ENCODE measurements at regions of chr6 and their contacts with region 1.

Region 1: GRCh38 chr6:38493931-38494547 is 145.7 kb downstream of the BTBD9 start:
- DNase-seq: peak; percentile 60 to 72 (median 69)
- H3K4me3 ChIP-seq: no peak overlapping the region
- H3K4me3 Mint-ChIP-seq: no peak overlapping the region
- H3K27ac ChIP-seq: no peak overlapping the region
- H3K27ac Mint-ChIP-seq: no peak overlapping the region
- H3K4me1 ChIP-seq: no peaks in the 10 kb centered on the region
- H3K4me1 Mint-ChIP-seq: peaks cover 0 to 7% (median 2%) of the 10 kb centered on the region in 4 donors
- H3K27me3 ChIP-seq: no peaks in the 10 kb centered on the region
- H3K27me3 Mint-ChIP-seq: no peaks in the 10 kb centered on the region

Region 2: GRCh38 chr6:37324131-37325033 is 1169.7 kb before region 1 on chr6:
- CTCF ChIA-PET with region 1: no interaction called
- POLR2A ChIA-PET with region 1: no interaction called
- intact Hi-C with region 1: loop called (anchors 2 kb)
- DNase-seq: no peak
- H3K4me3 ChIP-seq: no peak overlapping the region
- H3K4me3 Mint-ChIP-seq: no peak overlapping the region
- H3K27ac ChIP-seq: no peak overlapping the region
- H3K27ac Mint-ChIP-seq: peak overlapping the region in 4 of 7 donors; percentile 10 to 70 (median 44)
- H3K4me1 ChIP-seq: no peaks in the 10 kb centered on the region
- H3K4me1 Mint-ChIP-seq: peaks cover 3 to 4% (median 4%) of the 10 kb centered on the region in 4 donors
- H3K27me3 ChIP-seq: no peaks in the 10 kb centered on the region
- H3K27me3 Mint-ChIP-seq: no peaks in the 10 kb centered on the region

Region 3: GRCh38 chr6:37338745-37339255 is 1155.2 kb before region 1 on chr6:
- CTCF ChIA-PET with region 1: no interaction called
- POLR2A ChIA-PET with region 1: no interaction called
- intact Hi-C with region 1: no loop called
- DNase-seq: no peak
- H3K4me3 ChIP-seq: no peak overlapping the region
- H3K4me3 Mint-ChIP-seq: no peak overlapping the region
- H3K27ac ChIP-seq: no peak overlapping the region
- H3K27ac Mint-ChIP-seq: no peak overlapping the region
- H3K4me1 ChIP-seq: no peaks in the 10 kb centered on the region
- H3K4me1 Mint-ChIP-seq: no peaks in the 10 kb centered on the region
- H3K27me3 ChIP-seq: no peaks in the 10 kb centered on the region
- H3K27me3 Mint-ChIP-seq: peaks cover 0 to 2% of the 10 kb centered on the region in 2 donors

Region 4: DNA sequence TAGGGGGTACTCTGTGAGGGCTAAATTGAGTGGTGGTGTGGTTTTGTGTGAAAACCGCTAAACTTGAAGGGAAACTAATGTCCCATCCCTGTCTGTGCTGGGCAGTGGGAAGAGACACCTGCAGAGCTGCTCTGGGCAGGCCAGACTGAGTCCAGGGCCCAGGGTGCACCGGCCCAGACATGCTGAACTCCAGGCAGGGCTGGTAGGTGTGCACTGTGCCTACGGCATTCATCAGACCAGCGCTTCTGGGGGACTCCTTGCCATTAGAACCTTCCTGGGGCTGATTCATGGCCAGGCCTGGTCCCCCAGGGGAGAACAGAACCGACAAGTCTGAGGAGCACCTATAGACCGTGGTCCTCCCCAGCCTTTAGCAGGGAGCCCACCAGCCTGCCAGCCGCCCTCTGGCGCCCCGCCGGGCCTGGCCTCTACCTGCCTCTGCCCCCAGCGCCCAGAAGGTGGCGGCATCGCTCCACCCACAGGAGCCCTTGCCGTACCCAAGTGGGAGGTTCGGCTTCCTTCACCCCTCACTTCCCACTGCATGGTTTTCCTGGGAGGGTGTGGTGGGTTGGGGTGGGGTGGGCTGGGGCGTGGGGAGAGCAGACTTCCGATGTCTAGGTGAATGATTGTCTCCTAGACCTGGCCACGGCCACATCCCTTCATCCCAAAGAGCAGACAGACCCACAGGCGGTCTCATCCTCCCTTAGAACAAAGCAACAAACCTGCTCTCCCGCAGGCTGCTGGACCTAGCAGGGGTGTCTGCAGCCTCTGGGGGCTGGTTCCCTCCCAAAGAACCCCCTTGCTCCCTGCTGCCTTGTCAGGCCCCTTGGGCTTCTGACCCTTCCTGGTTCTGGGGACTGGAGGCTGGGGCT is 1009.9 kb before region 1 on chr6:
- CTCF ChIA-PET with region 1: no interaction called
- POLR2A ChIA-PET with region 1: no interaction called
- intact Hi-C with region 1: loop called (anchors 5 kb)
- DNase-seq: peak; percentile 74 to 81 (median 76)
- H3K4me3 ChIP-seq: no peak overlapping the region
- H3K4me3 Mint-ChIP-seq: no peak overlapping the region
- H3K27ac ChIP-seq: peak overlapping the region; percentile 30
- H3K27ac Mint-ChIP-seq: peak overlapping the region; percentile 15 to 97 (median 68)
- H3K4me1 ChIP-seq: peaks cover 34% of the 10 kb centered on the region
- H3K4me1 Mint-ChIP-seq: peaks cover 15 to 32% (median 24%) of the 10 kb centered on the region in 4 donors
- H3K27me3 ChIP-seq: no peaks in the 10 kb centered on the region
- H3K27me3 Mint-ChIP-seq: no peaks in the 10 kb centered on the region

Region 5: DNA sequence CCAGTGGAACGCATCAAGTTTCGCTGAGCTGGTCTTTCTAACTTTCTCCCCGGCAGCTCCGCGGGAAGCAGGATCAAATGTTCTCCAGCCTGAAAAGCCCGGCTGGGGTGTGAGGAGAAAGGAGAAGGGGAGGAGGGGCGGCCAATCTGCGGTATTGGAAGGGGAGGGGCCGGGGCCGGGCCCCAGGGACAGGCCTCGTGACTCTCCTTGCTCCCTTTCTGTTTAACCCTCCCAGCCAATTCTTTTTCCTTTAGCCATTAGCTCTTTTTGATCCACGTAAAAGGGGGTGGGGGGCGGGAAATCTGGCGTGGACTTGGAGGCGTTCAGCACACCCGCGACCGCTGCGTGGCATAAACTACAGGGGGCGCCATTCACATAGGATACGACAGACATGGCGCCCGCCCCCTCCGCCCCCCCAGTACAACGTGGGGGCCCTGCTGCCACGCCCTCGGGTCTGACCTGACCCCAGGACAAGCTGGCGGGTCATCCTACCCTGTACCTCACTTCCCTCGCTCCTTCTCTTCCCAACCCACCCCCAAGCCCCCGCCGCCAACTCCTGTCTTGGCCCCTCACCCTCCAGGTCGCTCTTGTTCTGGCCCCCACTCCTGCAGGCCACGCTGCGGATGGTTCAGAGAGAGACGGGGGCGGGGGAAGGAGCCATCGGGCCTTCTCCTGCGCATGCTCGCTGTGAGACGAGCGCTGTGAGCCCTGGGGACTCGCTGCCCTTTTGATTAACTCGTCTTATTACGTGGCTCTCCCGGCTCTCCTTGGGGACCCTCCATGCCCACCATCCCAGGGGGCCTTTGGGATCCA is 788.6 kb before region 1 on chr6:
- CTCF ChIA-PET with region 1: interaction called, 3 read pairs
- POLR2A ChIA-PET with region 1: no interaction called
- intact Hi-C with region 1: loop called (anchors 1 kb)
- DNase-seq: peak; percentile 76 to 86 (median 80)
- H3K4me3 ChIP-seq: peak overlapping the region; percentile 30 to 49
- H3K4me3 Mint-ChIP-seq: peak overlapping the region; percentile 83 to 91 (median 86)
- H3K27ac ChIP-seq: no peak overlapping the region
- H3K27ac Mint-ChIP-seq: peak overlapping the region; percentile 77 to 94 (median 86)
- H3K4me1 ChIP-seq: peaks cover 8% of the 10 kb centered on the region
- H3K4me1 Mint-ChIP-seq: peaks cover 8 to 21% (median 13%) of the 10 kb centered on the region in 4 donors
- H3K27me3 ChIP-seq: no peaks in the 10 kb centered on the region
- H3K27me3 Mint-ChIP-seq: no peaks in the 10 kb centered on the region

Region 6: DNA sequence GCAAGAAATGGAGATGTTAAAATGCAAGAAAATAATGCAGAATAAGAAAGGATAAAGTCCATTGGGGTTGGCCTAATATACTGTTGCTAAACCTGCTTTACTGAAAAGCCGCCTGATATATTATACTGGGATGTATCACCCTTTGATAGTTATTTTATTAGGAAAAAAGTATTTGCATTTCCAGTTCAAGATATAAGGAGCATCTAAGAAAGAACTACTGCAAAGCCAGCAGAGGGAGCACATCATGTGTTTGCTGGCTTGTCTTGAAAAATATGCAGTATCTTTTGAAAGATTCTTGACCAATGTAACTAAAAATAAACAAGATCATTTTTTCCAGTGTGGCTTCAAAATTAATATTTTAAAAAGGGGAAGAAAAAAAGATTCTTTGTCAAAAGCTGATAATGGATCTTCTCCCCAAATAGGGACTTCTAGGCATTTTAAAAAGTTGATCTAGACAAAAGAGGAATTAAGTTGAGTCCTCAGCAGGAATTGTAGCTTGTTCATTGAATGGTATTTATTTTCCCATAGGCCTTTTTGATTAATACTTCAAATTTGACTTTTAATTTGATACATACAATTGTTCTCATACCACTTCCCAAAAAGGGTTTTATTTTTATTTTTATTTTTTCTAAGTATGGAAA is 459.6 kb before region 1 on chr6:
- CTCF ChIA-PET with region 1: interaction called, 7 read pairs
- POLR2A ChIA-PET with region 1: no interaction called
- intact Hi-C with region 1: loop called (anchors 1 kb)
- DNase-seq: peak in 1 of 5 donors; percentile 2
- H3K4me3 ChIP-seq: no peak overlapping the region
- H3K4me3 Mint-ChIP-seq: peak overlapping the region in 3 of 8 donors; percentile 3 to 26 (median 11)
- H3K27ac ChIP-seq: no peak overlapping the region
- H3K27ac Mint-ChIP-seq: peak overlapping the region in 2 of 7 donors; percentile 13 to 20
- H3K4me1 ChIP-seq: peaks cover 23% of the 10 kb centered on the region
- H3K4me1 Mint-ChIP-seq: peaks cover 42 to 78% (median 58%) of the 10 kb centered on the region in 4 donors
- H3K27me3 ChIP-seq: no peaks in the 10 kb centered on the region
- H3K27me3 Mint-ChIP-seq: no peaks in the 10 kb centered on the region

Region 7: GRCh38 chr6:38483526-38483925 is 10.5 kb before region 1 on chr6:
- CTCF ChIA-PET with region 1: interaction called, 27 read pairs
- POLR2A ChIA-PET with region 1: no interaction called
- intact Hi-C with region 1: no loop called
- DNase-seq: no peak
- H3K4me3 ChIP-seq: no peak overlapping the region
- H3K4me3 Mint-ChIP-seq: no peak overlapping the region
- H3K27ac ChIP-seq: no peak overlapping the region
- H3K27ac Mint-ChIP-seq: no peak overlapping the region
- H3K4me1 ChIP-seq: no peaks in the 10 kb centered on the region
- H3K4me1 Mint-ChIP-seq: peaks cover 0 to 3% (median under 1%) of the 10 kb centered on the region in 4 donors
- H3K27me3 ChIP-seq: no peaks in the 10 kb centered on the region
- H3K27me3 Mint-ChIP-seq: no peaks in the 10 kb centered on the region

Region 8: DNA sequence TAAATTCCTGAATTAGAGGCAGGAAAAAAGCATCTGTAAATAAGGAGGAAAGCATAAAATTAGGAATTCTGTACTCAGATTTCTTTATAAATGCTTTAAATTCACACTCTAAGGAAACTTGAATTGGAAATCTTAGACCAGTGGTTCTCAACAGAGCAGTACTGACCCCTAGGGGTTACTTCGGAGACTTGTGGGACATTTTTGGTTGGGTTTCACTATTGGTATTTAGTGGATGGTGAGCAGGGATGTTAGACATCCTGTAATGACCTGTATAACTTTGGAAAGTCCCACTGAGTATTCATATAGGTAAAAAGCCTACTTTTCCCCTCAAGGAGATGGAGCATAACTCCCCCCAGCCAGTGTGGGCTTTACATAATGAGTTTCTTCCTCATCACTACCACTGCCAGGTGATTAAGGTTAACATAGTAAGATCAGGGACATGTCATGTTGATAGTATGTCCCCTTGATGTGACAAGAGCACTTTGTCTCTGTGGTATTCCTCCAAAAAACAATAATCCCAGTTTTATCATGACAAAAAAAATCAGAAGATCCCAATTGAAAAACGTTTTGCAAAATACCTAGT is 177.9 kb after region 1 on chr6:
- CTCF ChIA-PET with region 1: interaction called, 3 read pairs
- POLR2A ChIA-PET with region 1: no interaction called
- intact Hi-C with region 1: loop called (anchors 5 kb)
- DNase-seq: peak; percentile 33 to 46 (median 42)
- H3K4me3 ChIP-seq: no peak overlapping the region
- H3K4me3 Mint-ChIP-seq: no peak overlapping the region
- H3K27ac ChIP-seq: no peak overlapping the region
- H3K27ac Mint-ChIP-seq: peak overlapping the region in 2 of 7 donors; percentile 22 to 51
- H3K4me1 ChIP-seq: peaks cover 9% of the 10 kb centered on the region
- H3K4me1 Mint-ChIP-seq: peaks cover 9 to 21% (median 17%) of the 10 kb centered on the region in 4 donors
- H3K27me3 ChIP-seq: no peaks in the 10 kb centered on the region
- H3K27me3 Mint-ChIP-seq: no peaks in the 10 kb centered on the region

Measured in CD4-positive, alpha-beta memory T cell (primary cell).